Activated CD4-positive, alpha-beta T cell treated with anti-CD3 and anti-CD28 coated beads, Interleukin-2, amount 10 ng/mL, durations not matched to agents 24 days and 14 days (primary cell): ENCODE measurements at regions of chr16 and their contacts with region 1.

Region 1: GRCh38 chr16:27455700-27456099 is 53.7 kb downstream of the IL21R start:
- DNase-seq: peak; percentile 70
- H3K4me3 Mint-ChIP-seq: peak overlapping the region; percentile 27
- H3K27ac Mint-ChIP-seq: peak overlapping the region; percentile 76
- H3K4me1 Mint-ChIP-seq: peaks cover 46% of the 10 kb centered on the region
- H3K27me3 Mint-ChIP-seq: no peaks in the 10 kb centered on the region

Region 2: DNA sequence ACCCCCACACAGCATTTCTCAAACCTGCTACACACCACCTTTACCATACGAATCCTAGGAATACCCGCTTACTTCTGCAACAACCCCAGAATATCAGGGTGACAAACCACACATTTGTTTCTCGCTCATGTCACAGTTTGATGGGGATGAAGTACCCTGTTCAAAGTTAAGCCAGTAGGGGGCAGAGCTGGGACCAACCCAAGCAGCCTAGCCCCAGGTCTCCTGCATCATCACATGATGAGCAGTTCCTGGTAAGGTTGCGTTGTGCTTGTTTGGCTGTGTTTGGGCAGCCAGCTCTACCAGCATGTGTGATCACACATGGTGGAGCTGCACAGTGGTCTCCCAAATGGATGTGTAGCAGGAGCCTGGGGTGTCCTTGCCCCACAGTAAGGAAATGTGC is 492.6 kb before region 1 on chr16:
- intact Hi-C with region 1: loop called (anchors 5 kb)
- DNase-seq: peak; percentile 66
- H3K4me3 Mint-ChIP-seq: no peak overlapping the region
- H3K27ac Mint-ChIP-seq: no peak overlapping the region
- H3K4me1 Mint-ChIP-seq: no peaks in the 10 kb centered on the region
- H3K27me3 Mint-ChIP-seq: peaks cover 2% of the 10 kb centered on the region

Region 3: DNA sequence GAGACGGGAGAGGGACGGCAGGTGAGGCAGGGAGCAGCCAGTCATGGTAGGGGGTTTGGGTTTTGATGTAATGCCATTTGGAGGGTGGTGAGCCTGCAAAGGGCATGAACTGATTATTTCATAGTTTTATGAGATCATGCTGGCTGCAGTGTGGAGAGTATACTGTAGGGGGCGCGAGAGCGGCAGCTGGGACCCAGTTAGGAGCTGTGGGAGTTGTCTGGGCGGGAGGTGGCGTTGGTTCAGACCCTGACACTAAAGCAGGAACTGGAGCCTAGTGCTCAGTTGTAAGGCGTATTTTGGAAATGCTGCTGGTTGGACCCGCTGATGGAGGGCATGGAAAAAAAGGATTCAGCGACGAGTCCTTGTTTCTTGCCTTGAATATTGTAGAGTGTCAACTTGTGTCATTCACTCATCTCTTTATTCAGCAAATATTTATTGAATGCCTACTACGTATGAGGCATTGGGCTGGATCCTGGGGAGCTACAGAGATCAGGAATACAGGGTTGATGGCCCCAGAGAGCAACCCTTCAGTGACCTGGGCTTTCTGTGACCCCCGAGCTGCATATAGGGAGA is 276.1 kb before region 1 on chr16:
- intact Hi-C with region 1: loop called (anchors 2 kb)
- DNase-seq: peak; percentile 96
- H3K4me3 Mint-ChIP-seq: peak overlapping the region; percentile 3
- H3K27ac Mint-ChIP-seq: peak overlapping the region; percentile 73
- H3K4me1 Mint-ChIP-seq: peaks cover 38% of the 10 kb centered on the region
- H3K27me3 Mint-ChIP-seq: peaks cover 3% of the 10 kb centered on the region

Region 4: GRCh38 chr16:27313422-27314160 is 142.1 kb before region 1 on chr16 and contains the start of gene IL4R:
- intact Hi-C with region 1: loop called (anchors 5 kb)
- DNase-seq: peak; percentile 93
- H3K4me3 Mint-ChIP-seq: peak within 1 kb of the TSS; percentile 100
- H3K27ac Mint-ChIP-seq: peak within 1 kb of the TSS; percentile 96
- H3K4me1 Mint-ChIP-seq: peaks cover 48% of the 10 kb centered on the region
- H3K27me3 Mint-ChIP-seq: no peaks in the 10 kb centered on the region
- total RNA-seq, gene IL4R: 345 and 375 TPM in 2 replicates

Region 5: DNA sequence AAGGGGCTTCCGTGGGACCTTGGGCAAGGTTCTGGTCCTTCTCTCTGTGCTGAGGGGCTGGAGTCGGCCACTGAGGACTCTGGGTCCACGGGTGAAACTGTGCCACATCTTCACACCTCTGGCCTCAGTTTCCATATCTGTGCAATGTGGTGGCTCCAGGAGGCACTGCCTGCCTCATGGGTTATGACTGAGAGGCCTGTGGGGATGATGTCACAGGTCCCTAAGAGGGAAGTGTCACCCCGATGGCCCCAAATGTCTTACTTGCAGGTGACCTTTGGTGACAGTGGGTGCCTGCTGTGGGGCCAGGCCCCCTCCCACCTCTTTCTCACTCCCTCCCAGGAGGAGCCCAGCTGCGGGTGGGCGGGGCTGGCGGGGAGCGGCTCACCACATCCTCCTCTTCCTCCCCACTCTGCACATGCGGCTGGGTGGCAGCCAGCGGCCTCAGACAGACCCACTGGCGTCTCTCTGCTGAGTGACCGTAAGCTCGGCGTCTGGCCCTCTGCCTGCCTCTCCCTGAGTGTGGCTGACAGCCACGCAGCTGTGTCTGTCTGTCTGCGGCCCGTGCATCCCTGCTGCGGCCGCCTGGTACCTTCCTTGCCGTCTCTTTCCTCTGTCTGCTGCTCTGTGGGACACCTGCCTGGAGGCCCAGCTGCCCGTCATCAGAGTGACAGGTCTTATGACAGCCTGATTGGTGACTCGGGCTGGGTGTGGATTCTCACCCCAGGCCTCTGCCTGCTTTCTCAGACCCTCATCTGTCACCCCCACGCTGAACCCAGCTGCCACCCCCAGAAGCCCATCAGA is 53.7 kb before region 1 on chr16 and contains the start of gene IL21R:
- intact Hi-C with region 1: loop called (anchors 2 kb)
- DNase-seq: peak; percentile 94
- H3K4me3 Mint-ChIP-seq: peak within 1 kb of the TSS; percentile 100
- H3K27ac Mint-ChIP-seq: peak within 1 kb of the TSS; percentile 97
- H3K4me1 Mint-ChIP-seq: peaks cover 47% of the 10 kb centered on the region
- H3K27me3 Mint-ChIP-seq: no peaks in the 10 kb centered on the region
- total RNA-seq, gene IL21R: 94.9 and 100 TPM in 2 replicates

Region 6: DNA sequence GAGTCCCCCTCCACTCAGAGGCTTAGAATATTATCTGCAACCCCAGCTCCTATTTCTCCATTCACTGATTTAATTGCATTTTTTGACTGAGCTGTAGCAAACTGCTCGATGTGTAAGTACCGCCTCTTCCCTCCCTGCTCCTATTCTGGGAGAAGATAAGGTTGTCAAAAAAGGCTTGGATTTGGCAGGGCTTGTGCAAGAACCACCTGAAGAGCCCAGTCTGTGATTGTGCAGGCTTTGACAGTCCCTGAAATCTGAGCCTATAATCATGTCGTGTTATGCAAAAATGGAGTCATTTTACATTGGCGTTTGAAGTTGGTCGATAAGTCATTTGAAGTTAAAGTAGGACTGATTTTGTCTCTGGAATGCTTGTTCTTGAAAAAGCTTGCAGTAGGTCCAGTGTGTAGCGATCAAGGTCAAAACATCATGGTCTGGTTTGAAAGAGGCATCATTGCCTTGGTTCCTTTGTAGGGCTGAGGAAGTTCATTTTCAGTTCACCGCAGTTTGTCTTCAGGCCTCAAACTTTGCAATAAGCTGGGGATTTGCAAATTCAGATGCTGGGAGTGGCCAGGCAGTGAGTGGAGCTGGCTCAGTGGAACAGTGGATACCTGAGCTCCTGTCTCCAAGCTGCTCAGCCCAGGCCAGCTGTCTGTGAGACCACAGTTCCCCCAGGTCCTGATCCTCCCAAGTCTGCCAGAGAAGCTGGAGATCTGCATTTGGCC is 163.1 kb after region 1 on chr16:
- intact Hi-C with region 1: no loop called
- DNase-seq: no peak
- H3K4me3 Mint-ChIP-seq: no peak overlapping the region
- H3K27ac Mint-ChIP-seq: no peak overlapping the region
- H3K4me1 Mint-ChIP-seq: no peaks in the 10 kb centered on the region
- H3K27me3 Mint-ChIP-seq: no peaks in the 10 kb centered on the region